GM12878 (cell line): ENCODE measurements at regions of chr16 and their contacts with region 1.

Region 1: DNA sequence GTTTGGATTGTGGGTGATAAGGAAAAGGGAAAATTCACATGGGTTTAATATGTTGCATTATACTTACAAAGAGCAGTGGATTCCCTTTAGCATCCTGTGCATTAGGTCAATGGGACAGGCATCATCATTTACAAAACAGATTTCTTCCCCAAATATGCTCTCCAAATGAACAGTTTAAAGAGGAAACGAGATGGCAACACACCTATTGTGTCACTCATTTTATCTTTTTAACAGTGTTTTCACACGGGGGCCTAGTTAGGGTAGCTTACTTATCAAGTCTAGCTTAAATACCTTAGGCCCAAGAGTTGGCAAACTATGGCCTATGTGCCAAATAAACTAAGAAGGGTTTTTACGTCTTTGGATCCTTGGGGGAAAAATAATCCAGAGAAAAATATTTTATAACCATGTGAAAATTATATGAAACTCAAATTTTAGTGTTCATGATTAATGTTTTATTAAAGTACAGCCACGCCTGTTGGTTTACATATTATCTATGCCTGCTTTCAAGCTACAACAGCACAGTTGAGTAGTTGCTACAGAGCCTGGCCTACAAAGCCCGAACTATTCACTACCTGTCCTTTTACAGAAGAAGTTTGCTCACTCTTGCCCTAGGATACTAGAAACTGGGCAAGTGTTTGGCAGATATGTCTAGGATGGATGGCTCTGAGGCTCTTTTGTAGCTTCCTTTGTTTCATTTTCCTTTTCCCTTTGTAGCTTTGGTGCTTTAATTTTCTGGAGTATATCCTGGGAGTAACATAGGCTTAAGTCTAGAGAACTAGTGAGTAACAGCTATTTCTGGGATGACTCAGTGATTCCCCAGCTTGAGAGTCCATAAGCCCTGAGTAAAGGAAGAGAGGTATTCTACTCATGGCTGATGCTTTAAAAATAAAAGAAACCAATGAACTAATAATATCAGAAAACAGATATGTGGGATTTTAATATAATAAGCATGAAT is 12.4 kb downstream of the NUP93 start:
- DNase-seq: no peak
- ATAC-seq: peak; percentile 52
- H3K4me3 ChIP-seq: no peak overlapping the region
- H3K27ac ChIP-seq: no peak overlapping the region
- H3K4me1 ChIP-seq: no peaks in the 10 kb centered on the region
- H3K27me3 ChIP-seq: no peaks in the 10 kb centered on the region
- CTCF ChIP-seq: no peak
- EP300 ChIP-seq: no peak
- POLR2A ChIP-seq: no peak
- RAD21 ChIP-seq: no peak

Region 2: GRCh38 chr16:56729735-56730662 is 12.3 kb before region 1 on chr16 and contains the start of gene NUP93:
- CTCF ChIA-PET with region 1: interaction called, 11 read pairs
- POLR2A ChIA-PET with region 1: interaction called, 4 read pairs
- RAD21 ChIA-PET with region 1: interaction called, 4 read pairs
- SMC1A ChIA-PET with region 1: interaction called, 6 read pairs
- in situ Hi-C with region 1: no loop called
- intact Hi-C with region 1: no loop called
- DNase-seq: peak; percentile 47
- ATAC-seq: peak; percentile 84
- H3K4me3 ChIP-seq: peak within 1 kb of the TSS; percentile 95
- H3K27ac ChIP-seq: peak within 1 kb of the TSS; percentile 56
- H3K4me1 ChIP-seq: peaks cover 20% of the 10 kb centered on the region
- H3K27me3 ChIP-seq: no peaks in the 10 kb centered on the region
- CTCF ChIP-seq: 0 out of 6 replicates have a peak, but pooled peaks of 1 of the 3 experiments have one; percentile 4
- EP300 ChIP-seq: no peak
- POLR2A ChIP-seq: peak; percentile 93
- RAD21 ChIP-seq: no peak
- polyA plus RNA-seq, gene NUP93: 87.9 to 118 TPM

Region 3: DNA sequence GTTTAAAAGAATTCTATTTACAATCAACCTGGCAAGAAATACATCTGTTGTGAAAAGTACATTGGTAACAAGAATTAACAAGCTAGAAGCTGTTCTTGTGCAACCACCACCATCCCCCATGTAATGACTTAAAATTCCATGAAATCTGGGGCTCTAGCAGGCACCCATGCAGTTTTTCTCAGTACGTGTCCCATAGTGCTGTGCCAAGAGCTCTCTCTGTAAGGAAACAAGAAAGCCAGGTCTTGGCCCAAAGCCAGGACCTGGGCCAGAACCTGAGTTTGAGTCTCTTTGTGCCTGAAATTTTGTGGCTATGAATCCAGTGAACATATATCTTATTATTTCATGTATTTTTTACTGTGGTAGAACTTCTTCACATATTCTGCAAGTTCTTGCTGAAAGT is 34.3 kb after region 1 on chr16:
- CTCF ChIA-PET with region 1: no interaction called
- POLR2A ChIA-PET with region 1: no interaction called
- RAD21 ChIA-PET with region 1: no interaction called
- SMC1A ChIA-PET with region 1: interaction called, 10 read pairs
- in situ Hi-C with region 1: no loop called
- intact Hi-C with region 1: no loop called
- DNase-seq: no peak
- ATAC-seq: no peak
- H3K4me3 ChIP-seq: no peak overlapping the region
- H3K27ac ChIP-seq: no peak overlapping the region
- H3K4me1 ChIP-seq: peaks cover 6% of the 10 kb centered on the region
- H3K27me3 ChIP-seq: no peaks in the 10 kb centered on the region
- CTCF ChIP-seq: no peak
- EP300 ChIP-seq: no peak
- POLR2A ChIP-seq: no peak
- RAD21 ChIP-seq: no peak

Region 4: DNA sequence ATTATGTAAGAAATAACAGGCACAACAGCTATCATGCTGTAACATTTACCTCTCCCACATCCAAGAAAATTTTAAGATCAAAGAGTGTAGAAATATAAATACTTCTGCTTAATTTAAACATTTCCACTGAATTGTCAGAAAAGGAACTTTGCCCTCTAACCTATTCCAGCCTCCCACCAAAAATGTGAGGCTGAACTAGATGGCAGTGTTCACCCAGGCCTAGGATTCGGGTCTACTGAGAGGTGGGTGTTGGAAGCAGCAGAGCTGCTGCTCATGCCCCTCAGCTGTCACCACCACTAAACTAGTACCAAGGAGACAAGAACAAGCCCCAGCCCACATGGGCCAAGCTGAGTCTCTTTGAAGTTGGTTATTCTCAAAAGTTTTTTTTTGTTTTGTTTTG is 693.5 kb after region 1 on chr16:
- CTCF ChIA-PET with region 1: no interaction called
- POLR2A ChIA-PET with region 1: no interaction called
- RAD21 ChIA-PET with region 1: no interaction called
- SMC1A ChIA-PET with region 1: no interaction called
- in situ Hi-C with region 1: no loop called
- intact Hi-C with region 1: no loop called
- DNase-seq: no peak
- ATAC-seq: no peak
- H3K4me3 ChIP-seq: no peak overlapping the region
- H3K27ac ChIP-seq: no peak overlapping the region
- H3K4me1 ChIP-seq: no peaks in the 10 kb centered on the region
- H3K27me3 ChIP-seq: no peaks in the 10 kb centered on the region
- CTCF ChIP-seq: no peak
- EP300 ChIP-seq: no peak
- POLR2A ChIP-seq: no peak
- RAD21 ChIP-seq: no peak